ENCODE measurements at regions of chrX and their contacts with region 1.

Region 1: DNA sequence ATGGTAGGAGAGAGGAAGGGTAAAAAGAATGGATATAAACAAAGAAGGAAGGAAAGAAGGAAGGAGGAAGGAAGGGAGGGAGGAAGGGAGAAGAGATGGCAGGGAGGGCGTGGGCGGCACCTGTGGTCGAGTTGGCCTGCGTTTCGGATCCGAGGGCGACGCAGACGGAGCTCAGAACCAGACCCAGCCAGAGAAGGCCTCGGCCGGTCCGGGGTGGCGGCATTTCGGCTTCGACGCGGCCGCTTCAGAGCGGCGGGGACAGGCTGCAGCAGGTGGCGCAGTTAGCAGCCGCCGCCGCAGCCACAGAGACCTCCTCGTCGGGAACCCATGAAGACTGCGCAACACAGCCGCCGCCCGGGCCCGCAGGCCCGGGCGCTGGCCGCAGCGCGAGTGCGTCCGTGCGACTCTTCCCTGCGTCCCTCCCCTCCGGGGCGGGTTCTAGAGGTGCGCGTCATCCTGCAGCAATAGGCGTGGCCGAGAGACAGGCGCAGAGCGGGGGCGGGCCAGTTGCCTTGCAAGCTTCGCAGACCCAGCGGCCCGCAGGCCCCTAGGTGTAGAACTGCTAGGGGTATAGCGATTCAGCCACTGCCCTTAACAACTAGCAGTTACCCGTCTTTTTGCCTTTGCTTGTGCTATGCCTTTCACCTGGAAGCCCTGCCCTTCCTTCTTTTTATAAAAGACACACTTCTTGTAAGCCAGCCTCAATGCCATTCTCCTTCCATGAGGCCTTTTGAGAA is at the start of gene IDS:
- DNase-seq: peak; percentile 75
- ATAC-seq: peak; percentile 71
- H3K4me3 Mint-ChIP-seq: peak within 1 kb of the TSS; percentile 89
- H3K27ac Mint-ChIP-seq: peak within 1 kb of the TSS; percentile 96
- H3K4me1 Mint-ChIP-seq: peaks cover 10% of the 10 kb centered on the region
- H3K27me3 Mint-ChIP-seq: no peaks in the 10 kb centered on the region
- CTCF ChIP-seq: no peak
- total RNA-seq, gene IDS: 88.4 and 99.1 TPM in 2 replicates

Region 2: GRCh38 chrX:149521438-149521837 is 16.4 kb after region 1 on chrX:
- CTCF ChIA-PET with region 1: no interaction called
- POLR2A ChIA-PET with region 1: interaction called, 4 read pairs
- intact Hi-C with region 1: loop called (anchors 1 kb)
- DNase-seq: no peak
- ATAC-seq: no peak
- H3K4me3 Mint-ChIP-seq: no peak overlapping the region
- H3K27ac Mint-ChIP-seq: no peak overlapping the region
- H3K4me1 Mint-ChIP-seq: peaks cover 6% of the 10 kb centered on the region
- H3K27me3 Mint-ChIP-seq: peaks cover 2% of the 10 kb centered on the region
- CTCF ChIP-seq: no peak

Region 3: GRCh38 chrX:149527705-149528104 is 22.6 kb after region 1 on chrX:
- CTCF ChIA-PET with region 1: no interaction called
- POLR2A ChIA-PET with region 1: interaction called, 9 read pairs
- intact Hi-C with region 1: loop called (anchors 1 kb)
- DNase-seq: no peak
- ATAC-seq: peak; percentile 33
- H3K4me3 Mint-ChIP-seq: no peak overlapping the region
- H3K27ac Mint-ChIP-seq: peak overlapping the region; percentile 70
- H3K4me1 Mint-ChIP-seq: peaks cover 22% of the 10 kb centered on the region
- H3K27me3 Mint-ChIP-seq: no peaks in the 10 kb centered on the region
- CTCF ChIP-seq: no peak